CD8-positive, alpha-beta T cell (primary cell): ENCODE measurements at regions of chr13 and their contacts with region 1.

Region 1: GRCh38 chr13:45372189-45373148 is 31.5 kb upstream of the TPT1 start:
- DNase-seq: no peak
- ATAC-seq: no peak
- H3K4me3 ChIP-seq: no peak overlapping the region
- H3K4me3 Mint-ChIP-seq: no peak overlapping the region
- H3K27ac ChIP-seq: no peak overlapping the region
- H3K27ac Mint-ChIP-seq: no peak overlapping the region
- H3K4me1 ChIP-seq: peaks cover 19% of the 10 kb centered on the region
- H3K4me1 Mint-ChIP-seq: peaks cover 28% of the 10 kb centered on the region
- H3K27me3 ChIP-seq: no peaks in the 10 kb centered on the region
- H3K27me3 Mint-ChIP-seq: no peaks in the 10 kb centered on the region
- CTCF ChIP-seq: no peak

Region 2: GRCh38 chr13:45490068-45490467 is 117.6 kb after region 1 on chr13:
- CTCF ChIA-PET with region 1: interaction called, 25 read pairs
- POLR2A ChIA-PET with region 1: no interaction called
- intact Hi-C with region 1: loop called (anchors 1 to 2 kb)
- DNase-seq: peak in 4 of 9 experiments; percentile 19 to 62 (median 42)
- ATAC-seq: peak; percentile 93
- H3K4me3 ChIP-seq: no peak overlapping the region
- H3K4me3 Mint-ChIP-seq: no peak overlapping the region
- H3K27ac ChIP-seq: no peak overlapping the region
- H3K27ac Mint-ChIP-seq: no peak overlapping the region
- H3K4me1 ChIP-seq: no peaks in the 10 kb centered on the region
- H3K4me1 Mint-ChIP-seq: no peaks in the 10 kb centered on the region
- H3K27me3 ChIP-seq: no peaks in the 10 kb centered on the region
- H3K27me3 Mint-ChIP-seq: no peaks in the 10 kb centered on the region
- CTCF ChIP-seq: peak; percentile 65

Region 3: DNA sequence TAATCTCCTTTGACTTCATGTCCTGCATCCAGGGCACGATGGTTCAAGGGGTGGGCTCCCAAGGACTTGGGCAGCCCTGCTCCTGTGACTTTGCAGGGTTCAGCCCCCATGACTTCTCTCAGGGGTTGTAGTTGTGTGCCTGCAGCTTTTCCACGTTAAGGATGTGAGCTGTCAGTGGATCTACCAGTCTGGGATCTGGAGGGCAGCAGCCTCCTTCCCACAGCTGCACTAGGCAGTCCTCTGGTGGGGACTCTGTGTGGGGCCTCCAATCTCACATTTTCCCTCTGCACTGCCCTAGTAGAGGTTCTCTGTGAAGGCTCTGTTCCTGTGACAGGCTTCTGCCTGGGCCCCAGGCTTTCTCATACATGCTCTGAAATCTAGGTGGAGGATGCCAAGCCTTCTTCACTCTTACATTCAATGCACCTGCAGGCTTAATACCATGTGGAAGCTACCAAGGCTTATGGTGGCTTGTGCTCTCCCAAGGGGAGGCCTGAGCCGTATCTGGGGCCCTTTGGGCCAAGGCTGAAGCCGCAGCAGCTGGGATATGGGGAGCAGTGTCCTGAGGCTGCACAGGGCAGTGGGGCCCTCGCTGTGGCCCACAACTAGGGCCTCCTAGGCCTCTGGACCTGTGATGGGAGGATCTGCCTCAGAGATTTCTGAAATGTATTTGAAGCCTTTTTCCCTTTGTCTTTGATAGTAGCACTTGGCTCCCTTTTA is 282.3 kb after region 1 on chr13:
- CTCF ChIA-PET with region 1: no interaction called
- POLR2A ChIA-PET with region 1: no interaction called
- intact Hi-C with region 1: no loop called
- DNase-seq: no peak
- ATAC-seq: no peak
- H3K4me3 ChIP-seq: no peak overlapping the region
- H3K4me3 Mint-ChIP-seq: no peak overlapping the region
- H3K27ac ChIP-seq: no peak overlapping the region
- H3K27ac Mint-ChIP-seq: no peak overlapping the region
- H3K4me1 ChIP-seq: no peaks in the 10 kb centered on the region
- H3K4me1 Mint-ChIP-seq: no peaks in the 10 kb centered on the region
- H3K27me3 ChIP-seq: no peaks in the 10 kb centered on the region
- H3K27me3 Mint-ChIP-seq: no peaks in the 10 kb centered on the region
- CTCF ChIP-seq: no peak